Panc1 (cell line): ENCODE measurements at regions of chr5 and their contacts with region 1.

Region 1: GRCh38 chr5:7941692-7942091 is 72.7 kb downstream of the MTRR start:
- DNase-seq: no peak
- ATAC-seq: no peak
- H3K4me3 ChIP-seq: no peak overlapping the region
- H3K27ac ChIP-seq: no peak overlapping the region
- H3K4me1 ChIP-seq: no peaks in the 10 kb centered on the region
- H3K27me3 ChIP-seq: no peaks in the 10 kb centered on the region
- CTCF ChIP-seq: no peak

Region 2: GRCh38 chr5:9034649-9035048 is 1093.0 kb after region 1 on chr5:
- CTCF ChIA-PET with region 1: no interaction called
- POLR2A ChIA-PET with region 1: no interaction called
- in situ Hi-C with region 1: no loop called
- intact Hi-C with region 1: loop called (anchors 2 kb)
- DNase-seq: no peak
- ATAC-seq: no peak
- H3K4me3 ChIP-seq: no peak overlapping the region
- H3K27ac ChIP-seq: no peak overlapping the region
- H3K4me1 ChIP-seq: no peaks in the 10 kb centered on the region
- H3K27me3 ChIP-seq: no peaks in the 10 kb centered on the region
- CTCF ChIP-seq: no peak